ENCODE measurements at regions of chr7 and their contacts with region 1.

Region 1: GRCh38 chr7:105013221-105013815 is 687 bp upstream of the KMT2E start:
- DNase-seq: peak; percentile 90
- H3K4me3 ChIP-seq: peak overlapping the region; percentile 87 to 95
- H3K27ac ChIP-seq: peak overlapping the region; percentile 97 to 100
- H3K4me1 ChIP-seq: no peaks in the 10 kb centered on the region
- H3K27me3 ChIP-seq: no peaks in the 10 kb centered on the region
- CTCF ChIP-seq: peak in 3 of 4 experiments; percentile 28 to 91 (median 64)
- POLR2A ChIP-seq: peak; percentile 55

Region 2: DNA sequence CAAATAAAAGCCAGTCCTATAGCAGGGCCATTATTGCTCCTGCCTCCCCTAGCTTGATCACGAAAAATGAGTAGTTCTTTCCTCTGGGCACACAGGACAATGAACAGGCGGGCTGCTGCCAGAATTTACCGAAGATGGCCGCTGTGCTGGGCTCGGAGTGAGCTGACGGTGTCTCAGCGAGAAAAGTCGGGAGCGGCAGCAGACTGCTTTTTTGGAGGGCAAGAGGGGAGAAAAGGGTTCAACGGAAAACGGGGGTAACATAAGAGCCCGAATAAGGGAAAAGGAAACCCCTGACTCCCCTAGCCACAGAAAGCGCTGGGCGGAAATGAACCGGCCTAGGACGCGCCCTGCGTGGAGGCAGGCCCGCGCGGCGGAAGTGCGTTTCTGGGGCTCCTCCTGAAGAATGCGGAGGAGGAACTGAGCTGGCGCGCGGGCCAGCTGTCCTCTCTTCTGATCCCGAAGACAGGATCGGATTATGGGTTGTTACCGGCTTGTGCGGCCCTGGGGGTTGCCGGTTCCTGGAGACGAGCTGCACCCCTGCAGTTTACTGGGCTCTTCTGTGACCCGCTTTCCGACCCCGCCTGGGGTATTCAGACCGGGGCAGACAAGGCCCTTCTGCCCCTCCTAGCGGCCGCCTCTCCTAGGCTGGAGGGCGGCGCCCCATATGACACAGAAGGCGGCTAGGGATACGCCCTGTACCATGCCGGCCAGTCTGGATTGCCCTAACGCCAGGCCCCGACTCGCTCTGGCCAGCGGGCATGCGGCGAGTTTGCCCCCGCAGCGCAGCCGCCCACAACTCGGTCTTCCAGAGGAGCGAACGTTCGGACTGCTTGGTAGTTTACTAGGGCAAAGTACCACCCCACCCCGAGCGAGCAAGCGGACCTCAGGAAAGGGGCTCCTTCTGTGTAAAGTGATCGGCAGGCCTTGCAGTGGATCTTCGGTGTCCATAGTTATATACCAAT is 29.5 kb before region 1 on chr7:
- intact Hi-C with region 1: loop called (anchors 2 kb)
- DNase-seq: peak; percentile 86
- H3K4me3 ChIP-seq: peak overlapping the region; percentile 48 to 55
- H3K27ac ChIP-seq: peak overlapping the region; percentile 97 to 98
- H3K4me1 ChIP-seq: peaks cover 32% of the 10 kb centered on the region
- H3K27me3 ChIP-seq: no peaks in the 10 kb centered on the region
- CTCF ChIP-seq: peak in 3 of 4 experiments; percentile 18 to 82 (median 79)
- POLR2A ChIP-seq: peak; percentile 61

Region 3: GRCh38 chr7:105101864-105102263 is 88.5 kb after region 1 on chr7:
- intact Hi-C with region 1: loop called (anchors 10 kb)
- DNase-seq: no peak
- H3K4me3 ChIP-seq: no peak overlapping the region
- H3K27ac ChIP-seq: no peak overlapping the region
- H3K4me1 ChIP-seq: peaks cover 7% of the 10 kb centered on the region
- H3K27me3 ChIP-seq: no peaks in the 10 kb centered on the region
- CTCF ChIP-seq: no peak
- POLR2A ChIP-seq: no peak

Measured in prostate gland (tissue), 2 donors.